ENCODE measurements at regions of chr2 and their contacts with region 1.

Region 1: GRCh38 chr2:223837287-223838061 is at the start of gene AP1S3:
- DNase-seq: peak; percentile 67
- H3K4me3 Mint-ChIP-seq: peak within 1 kb of the TSS; percentile 92
- H3K27ac Mint-ChIP-seq: peak within 1 kb of the TSS; percentile 82
- H3K4me1 Mint-ChIP-seq: peaks cover 17% of the 10 kb centered on the region
- H3K27me3 Mint-ChIP-seq: no peaks in the 10 kb centered on the region
- total RNA-seq, gene AP1S3: 12.7 and 13.9 TPM in 2 replicates

Region 2: GRCh38 chr2:223751012-223751411 is 86.5 kb before region 1 on chr2:
- intact Hi-C with region 1: no loop called
- DNase-seq: no peak
- H3K4me3 Mint-ChIP-seq: no peak overlapping the region
- H3K27ac Mint-ChIP-seq: no peak overlapping the region
- H3K4me1 Mint-ChIP-seq: no peaks in the 10 kb centered on the region
- H3K27me3 Mint-ChIP-seq: peaks cover 11% of the 10 kb centered on the region

Region 3: GRCh38 chr2:223815186-223815883 is 22.1 kb before region 1 on chr2:
- intact Hi-C with region 1: loop called (anchors 2 kb)
- DNase-seq: no peak
- H3K4me3 Mint-ChIP-seq: no peak overlapping the region
- H3K27ac Mint-ChIP-seq: no peak overlapping the region
- H3K4me1 Mint-ChIP-seq: peaks cover 4% of the 10 kb centered on the region
- H3K27me3 Mint-ChIP-seq: no peaks in the 10 kb centered on the region

Region 4: GRCh38 chr2:223854741-223855140 is 17.3 kb after region 1 on chr2:
- intact Hi-C with region 1: loop called (anchors 2 kb)
- DNase-seq: no peak
- H3K4me3 Mint-ChIP-seq: no peak overlapping the region
- H3K27ac Mint-ChIP-seq: no peak overlapping the region
- H3K4me1 Mint-ChIP-seq: peaks cover 23% of the 10 kb centered on the region
- H3K27me3 Mint-ChIP-seq: no peaks in the 10 kb centered on the region

Region 5: GRCh38 chr2:223877731-223878435 is 40.4 kb after region 1 on chr2:
- intact Hi-C with region 1: no loop called
- DNase-seq: no peak
- H3K4me3 Mint-ChIP-seq: no peak overlapping the region
- H3K27ac Mint-ChIP-seq: no peak overlapping the region
- H3K4me1 Mint-ChIP-seq: no peaks in the 10 kb centered on the region
- H3K27me3 Mint-ChIP-seq: no peaks in the 10 kb centered on the region

Region 6: DNA sequence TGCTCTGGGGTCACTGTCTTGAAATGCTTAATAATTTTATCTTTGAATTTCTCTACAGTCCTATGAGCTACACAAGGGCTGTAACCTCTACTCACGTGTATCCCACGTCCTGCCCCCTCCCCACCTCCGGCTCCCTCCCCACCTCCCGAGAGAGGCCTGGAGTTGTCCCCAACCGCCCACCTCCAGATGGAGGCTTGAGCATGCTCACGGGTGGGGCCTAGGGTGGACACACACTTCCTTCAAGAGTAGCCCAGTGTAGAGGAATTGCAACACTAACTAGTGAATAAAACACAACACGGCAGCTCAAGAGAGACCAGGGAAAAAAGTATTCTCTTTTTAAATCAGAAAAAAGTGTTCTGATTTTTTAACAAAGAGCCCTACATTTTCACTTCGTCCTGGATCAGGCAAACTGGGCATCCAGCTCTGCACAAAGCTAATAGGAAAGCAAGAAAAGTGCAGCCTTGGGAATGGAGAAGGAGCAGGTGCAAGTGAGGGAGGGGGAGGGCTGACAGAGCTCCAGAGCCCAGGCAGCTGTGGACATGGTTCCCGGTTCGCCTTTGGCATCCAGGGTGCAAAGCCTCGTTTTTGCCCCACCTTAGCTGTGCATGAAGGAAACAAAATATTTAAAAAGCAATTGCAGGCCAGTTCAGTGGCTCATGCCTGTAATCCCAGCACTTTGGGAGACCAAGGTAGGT is 482.1 kb after region 1 on chr2:
- intact Hi-C with region 1: no loop called
- DNase-seq: no peak
- H3K4me3 Mint-ChIP-seq: no peak overlapping the region
- H3K27ac Mint-ChIP-seq: no peak overlapping the region
- H3K4me1 Mint-ChIP-seq: no peaks in the 10 kb centered on the region
- H3K27me3 Mint-ChIP-seq: peaks cover 26% of the 10 kb centered on the region